ENCODE measurements at regions of chr18 and their contacts with region 1.

Region 1: GRCh38 chr18:74652392-74652988 is 54.8 kb downstream of the ZNF407 start:
- DNase-seq: peak; percentile 19
- H3K4me3 ChIP-seq: no peak overlapping the region
- H3K27ac ChIP-seq: no peak overlapping the region
- H3K4me1 ChIP-seq: no peaks in the 10 kb centered on the region
- H3K27me3 ChIP-seq: no peaks in the 10 kb centered on the region
- CTCF ChIP-seq: peak; percentile 44 to 59

Region 2: DNA sequence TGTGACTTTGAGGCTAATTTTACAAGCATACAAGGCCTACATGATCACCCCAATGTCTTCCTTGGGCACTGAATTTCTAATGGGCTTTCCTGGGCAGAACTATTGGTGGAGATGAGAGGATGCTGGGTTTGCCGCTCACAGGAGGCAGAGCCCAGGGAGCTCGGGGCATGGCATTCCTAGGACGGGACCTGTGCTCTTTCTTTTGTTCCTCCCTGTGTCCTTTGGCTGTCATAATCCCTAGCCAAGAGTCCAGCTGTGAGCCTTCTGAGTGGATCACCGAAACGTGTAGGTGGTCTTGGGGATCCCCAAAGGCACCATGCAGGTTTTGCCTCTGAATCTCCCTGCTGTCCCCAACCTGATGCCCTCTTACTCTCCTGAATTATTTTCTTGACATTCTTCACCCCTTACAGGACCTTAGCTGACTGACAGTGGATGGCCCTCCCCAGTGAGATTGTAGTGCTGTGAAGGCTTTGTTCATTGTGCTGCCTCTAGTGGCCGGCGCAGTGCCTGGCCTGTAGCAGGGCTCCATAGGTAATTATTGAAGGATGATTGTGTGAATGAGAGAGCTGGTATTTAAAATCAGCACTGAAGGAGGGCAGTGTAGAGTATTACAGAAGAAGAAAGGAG is 167.1 kb after region 1 on chr18:
- CTCF ChIA-PET with region 1: no interaction called
- dilution Hi-C with region 1: no loop called
- in situ Hi-C with region 1: no loop called
- intact Hi-C with region 1: loop called (anchors 5 kb)
- DNase-seq: no peak
- H3K4me3 ChIP-seq: no peak overlapping the region
- H3K27ac ChIP-seq: no peak overlapping the region
- H3K4me1 ChIP-seq: peaks cover 3% of the 10 kb centered on the region
- H3K27me3 ChIP-seq: no peaks in the 10 kb centered on the region
- CTCF ChIP-seq: peak; percentile 50 to 78

Region 3: GRCh38 chr18:74963820-74964446 is 311.4 kb after region 1 on chr18:
- CTCF ChIA-PET with region 1: no interaction called
- dilution Hi-C with region 1: no loop called
- in situ Hi-C with region 1: no loop called
- intact Hi-C with region 1: loop called (anchors 1 kb)
- DNase-seq: peak; percentile 31
- H3K4me3 ChIP-seq: no peak overlapping the region
- H3K27ac ChIP-seq: no peak overlapping the region
- H3K4me1 ChIP-seq: no peaks in the 10 kb centered on the region
- H3K27me3 ChIP-seq: no peaks in the 10 kb centered on the region
- CTCF ChIP-seq: peak; percentile 16 to 54

Region 4: GRCh38 chr18:75209129-75209950 is 556.9 kb after region 1 on chr18 and contains the start of gene PTGR3:
- CTCF ChIA-PET with region 1: no interaction called
- dilution Hi-C with region 1: no loop called
- in situ Hi-C with region 1: no loop called
- intact Hi-C with region 1: loop called (anchors 5 kb)
- DNase-seq: peak; percentile 81
- H3K4me3 ChIP-seq: peak within 1 kb of the TSS; percentile 79 to 98 (median 88)
- H3K27ac ChIP-seq: peak within 1 kb of the TSS; percentile 74
- H3K4me1 ChIP-seq: peaks cover 36% of the 10 kb centered on the region
- H3K27me3 ChIP-seq: no peaks in the 10 kb centered on the region
- CTCF ChIP-seq: no peak
- total RNA-seq, gene PTGR3: 15.2 to 29.4 TPM

Region 5: DNA sequence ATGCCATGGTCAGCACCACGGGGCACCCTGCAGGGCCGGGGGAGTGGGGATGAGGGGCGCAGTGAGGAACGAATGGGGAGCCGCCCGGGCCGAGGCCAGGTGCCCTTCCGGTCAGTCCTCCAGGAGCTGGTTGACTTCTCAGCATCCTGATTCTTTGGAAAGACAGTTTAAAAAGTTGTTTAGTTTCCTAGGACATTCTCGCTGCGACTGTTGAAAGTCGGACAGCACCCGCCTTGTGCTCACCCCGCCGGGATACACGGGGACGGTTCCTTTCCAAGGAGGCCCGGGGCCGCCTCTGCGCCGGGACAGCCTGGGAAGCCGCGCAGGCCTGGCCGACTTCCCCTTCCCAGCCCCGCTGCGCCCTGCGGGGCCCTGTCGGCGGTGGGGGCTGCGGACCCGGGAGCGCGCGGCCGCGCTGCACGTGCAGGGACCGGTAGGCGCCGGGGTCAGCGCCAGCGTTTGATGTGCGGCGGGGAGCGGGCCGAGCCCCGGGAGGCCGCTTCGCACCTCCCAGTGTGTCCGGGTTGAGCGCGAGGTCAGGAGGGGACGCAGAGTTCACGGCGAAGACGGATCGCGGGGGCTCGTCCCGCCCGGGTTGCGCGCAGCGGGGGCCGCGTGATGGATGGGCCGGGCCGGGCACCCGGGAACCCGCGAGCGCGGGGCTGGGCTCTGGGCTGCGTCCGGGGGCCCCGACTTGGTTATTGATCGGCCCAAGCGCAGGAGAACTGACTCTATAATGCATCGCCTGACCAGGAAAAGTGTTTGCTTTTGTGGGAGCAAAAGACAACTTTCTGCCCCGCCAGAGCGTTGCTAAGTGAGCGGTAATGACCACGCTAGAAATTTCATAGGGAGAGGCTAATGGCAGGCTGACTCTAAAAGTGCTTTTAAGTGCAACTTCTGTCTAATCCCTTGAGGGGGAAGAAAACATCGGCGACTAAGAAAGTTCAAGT is 803.0 kb after region 1 on chr18:
- CTCF ChIA-PET with region 1: no interaction called
- dilution Hi-C with region 1: no loop called
- in situ Hi-C with region 1: loop called in 1 of 2 experiments (anchors 25 kb)
- intact Hi-C with region 1: no loop called
- DNase-seq: no peak
- H3K4me3 ChIP-seq: peak overlapping the region in 1 of 3 experiments; percentile 6
- H3K27ac ChIP-seq: no peak overlapping the region
- H3K4me1 ChIP-seq: no peaks in the 10 kb centered on the region
- H3K27me3 ChIP-seq: peaks cover 7% of the 10 kb centered on the region
- CTCF ChIP-seq: no peak

Region 6: GRCh38 chr18:75727456-75727855 is 1075.0 kb after region 1 on chr18:
- CTCF ChIA-PET with region 1: no interaction called
- dilution Hi-C with region 1: no loop called
- in situ Hi-C with region 1: no loop called
- intact Hi-C with region 1: loop called (anchors 5 kb)
- DNase-seq: peak; percentile 2
- H3K4me3 ChIP-seq: no peak overlapping the region
- H3K27ac ChIP-seq: no peak overlapping the region
- H3K4me1 ChIP-seq: no peaks in the 10 kb centered on the region
- H3K27me3 ChIP-seq: no peaks in the 10 kb centered on the region
- CTCF ChIP-seq: peak; percentile 49 to 59

Region 7: DNA sequence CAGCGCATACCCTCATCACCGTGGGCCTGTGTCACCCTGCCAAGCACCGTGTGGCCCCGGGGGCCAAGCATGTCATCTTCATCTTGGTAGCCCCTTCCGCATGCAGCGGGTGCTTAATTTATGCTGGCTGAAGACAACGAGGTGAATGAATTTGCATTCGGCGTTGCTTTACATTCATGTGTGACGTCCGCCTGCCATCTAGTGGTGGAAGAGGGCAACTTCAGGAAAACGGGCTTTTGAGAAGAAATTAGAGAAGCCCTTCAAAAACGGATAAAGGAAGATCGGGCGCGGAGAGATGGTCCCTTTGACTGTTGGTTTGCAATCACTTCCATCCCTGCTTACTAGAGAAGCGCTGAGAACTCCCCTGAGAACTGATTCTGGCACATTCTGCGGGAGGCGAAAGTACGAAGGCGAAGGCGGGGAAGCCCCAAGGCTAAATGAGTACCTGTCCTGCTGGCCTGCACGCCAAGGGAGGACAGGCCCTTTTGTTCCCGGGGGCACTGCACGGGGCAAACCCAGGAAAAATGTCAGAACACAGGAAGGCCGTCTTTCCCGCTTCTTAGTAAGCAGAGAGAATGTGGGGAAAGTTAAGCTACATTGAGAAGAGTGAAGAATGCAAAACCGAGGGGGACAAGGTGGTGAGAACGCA is 1696.7 kb after region 1 on chr18:
- CTCF ChIA-PET with region 1: no interaction called
- dilution Hi-C with region 1: no loop called
- in situ Hi-C with region 1: loop called in 1 of 2 experiments (anchors 25 kb)
- intact Hi-C with region 1: loop called (anchors 1 kb)
- DNase-seq: peak; percentile 58
- H3K4me3 ChIP-seq: peak overlapping the region in 2 of 3 experiments; percentile 25 to 39
- H3K27ac ChIP-seq: no peak overlapping the region
- H3K4me1 ChIP-seq: peaks cover 18% of the 10 kb centered on the region
- H3K27me3 ChIP-seq: no peaks in the 10 kb centered on the region
- CTCF ChIP-seq: peak; percentile 88 to 90

Measured in mammary epithelial cell (primary cell).